H1 (cell line): ENCODE measurements at regions of chr2 and their contacts with region 1.

Region 1: GRCh38 chr2:21118302-21118920 is 5.4 kb upstream of the TDRD15 start:
- DNase-seq: no peak
- H3K4me3 ChIP-seq: no peak overlapping the region
- H3K27ac ChIP-seq: no peak overlapping the region
- H3K4me1 ChIP-seq: no peaks in the 10 kb centered on the region
- H3K27me3 ChIP-seq: no peaks in the 10 kb centered on the region
- CTCF ChIP-seq: peak in 2 of 3 experiments; percentile 61 to 64; a peak in 3 of 4 replicates
- EP300 ChIP-seq: no peak
- POLR2A ChIP-seq: no peak
- RAD21 ChIP-seq: peak; percentile 86 to 88

Region 2: GRCh38 chr2:20976527-20976926 is 141.9 kb before region 1 on chr2:
- CTCF ChIA-PET with region 1: no interaction called
- POLR2A ChIA-PET with region 1: no interaction called
- DNase-seq: no peak
- H3K4me3 ChIP-seq: no peak overlapping the region
- H3K27ac ChIP-seq: no peak overlapping the region
- H3K4me1 ChIP-seq: no peaks in the 10 kb centered on the region
- H3K27me3 ChIP-seq: no peaks in the 10 kb centered on the region
- CTCF ChIP-seq: no peak
- EP300 ChIP-seq: no peak
- POLR2A ChIP-seq: no peak
- RAD21 ChIP-seq: no peak

Region 3: DNA sequence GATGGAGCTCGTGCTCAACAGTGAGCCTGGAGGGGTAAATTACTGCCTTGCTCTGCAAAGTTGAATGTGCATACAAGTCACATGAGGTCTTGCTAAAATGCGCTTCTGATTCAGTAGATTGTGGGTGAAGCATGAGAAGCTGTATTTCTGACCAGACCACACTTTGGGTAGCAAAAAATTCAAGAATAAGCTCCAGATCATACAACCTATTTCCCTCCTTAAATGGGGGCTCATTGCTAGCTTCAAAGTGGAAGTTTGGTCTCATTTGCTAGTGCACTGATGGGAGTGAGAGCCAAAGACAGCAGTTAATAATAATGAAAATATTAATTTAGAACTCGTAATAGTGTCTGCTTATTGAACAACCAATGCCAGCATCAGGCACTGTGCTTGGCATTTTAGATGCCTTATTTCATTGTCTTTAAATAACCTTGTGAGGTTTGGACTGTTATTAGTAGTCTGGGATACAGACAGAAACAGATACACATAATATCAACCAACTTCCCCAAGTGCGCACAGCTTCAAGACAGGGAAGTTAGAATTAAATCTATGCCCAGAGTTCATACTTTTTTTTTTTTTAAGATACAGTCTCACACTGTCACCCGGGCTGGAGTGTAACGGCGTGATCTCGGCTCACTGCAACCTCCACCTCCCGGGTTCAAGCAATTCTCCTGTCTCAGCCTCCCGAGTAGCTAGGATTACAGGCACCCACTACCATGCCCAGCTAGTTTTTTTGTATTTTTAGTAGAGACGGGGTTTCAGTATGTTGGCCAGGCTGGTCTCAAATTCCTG is 92.5 kb before region 1 on chr2:
- CTCF ChIA-PET with region 1: interaction called, 11 read pairs
- POLR2A ChIA-PET with region 1: no interaction called
- DNase-seq: no peak
- H3K4me3 ChIP-seq: no peak overlapping the region
- H3K27ac ChIP-seq: no peak overlapping the region
- H3K4me1 ChIP-seq: no peaks in the 10 kb centered on the region
- H3K27me3 ChIP-seq: no peaks in the 10 kb centered on the region
- CTCF ChIP-seq: no peak
- EP300 ChIP-seq: no peak
- POLR2A ChIP-seq: no peak
- RAD21 ChIP-seq: no peak

Region 4: GRCh38 chr2:21042958-21043743 is 75.3 kb before region 1 on chr2:
- CTCF ChIA-PET with region 1: interaction called, 188 read pairs
- POLR2A ChIA-PET with region 1: no interaction called
- DNase-seq: peak; percentile 38 to 89
- H3K4me3 ChIP-seq: peak overlapping the region; percentile 40 to 68 (median 52)
- H3K27ac ChIP-seq: no peak overlapping the region
- H3K4me1 ChIP-seq: peaks cover 0 to 10% (median 9%) of the 10 kb centered on the region in 4 experiments
- H3K27me3 ChIP-seq: peaks cover 1 to 12% (median 9%) of the 10 kb centered on the region in 4 experiments; a peak in 6 of 7 replicates
- CTCF ChIP-seq: peak; percentile 88 to 96 (median 90)
- EP300 ChIP-seq: no peak
- POLR2A ChIP-seq: no peak
- RAD21 ChIP-seq: peak; percentile 96 to 100

Region 5: DNA sequence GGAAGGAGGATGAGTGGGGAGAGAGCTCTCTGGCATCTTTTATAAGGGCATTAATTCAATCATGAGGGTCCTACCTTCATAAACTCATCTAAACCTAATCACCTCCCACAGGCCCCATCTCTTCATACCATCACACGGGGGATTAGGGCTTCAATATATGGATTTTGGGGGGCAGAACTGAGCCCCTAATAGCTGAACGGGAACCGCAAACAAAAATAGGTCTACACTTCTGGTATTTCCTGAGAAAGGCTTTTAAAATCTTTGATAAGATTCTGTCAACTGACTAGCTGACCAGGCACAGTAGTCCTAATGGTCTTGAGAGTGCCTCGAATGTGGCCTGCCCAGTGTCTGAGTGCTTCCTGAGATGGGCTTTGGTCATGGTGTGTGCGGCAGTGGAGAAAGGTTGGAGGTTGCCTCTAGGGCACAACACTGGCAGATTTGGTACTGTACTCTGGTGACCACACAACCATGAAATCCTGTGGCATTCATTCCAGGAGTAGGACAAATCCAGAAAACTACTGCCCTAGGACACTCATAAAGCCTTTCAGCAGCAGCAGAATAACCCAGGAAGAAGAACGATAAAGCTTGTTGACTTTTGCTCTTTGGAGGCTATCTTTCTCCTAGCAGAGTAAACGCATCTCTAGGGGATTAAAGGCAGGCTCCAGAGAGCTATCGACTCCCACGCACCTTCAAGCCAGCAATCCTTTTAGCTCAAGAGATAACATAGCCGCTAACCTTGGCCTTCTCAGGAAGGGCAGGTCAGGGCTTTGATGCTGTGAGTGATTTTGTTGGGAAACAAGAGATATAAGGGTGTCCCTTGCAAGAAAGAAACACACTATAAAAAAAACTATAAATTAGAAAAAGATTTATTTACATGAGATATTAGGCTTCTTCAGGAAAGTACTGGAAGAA is 62.3 kb before region 1 on chr2:
- CTCF ChIA-PET with region 1: interaction called, 22 read pairs
- POLR2A ChIA-PET with region 1: no interaction called
- DNase-seq: no peak
- H3K4me3 ChIP-seq: no peak overlapping the region
- H3K27ac ChIP-seq: no peak overlapping the region
- H3K4me1 ChIP-seq: peaks cover 0 to 4% (median 0%) of the 10 kb centered on the region in 4 experiments; a peak in 1 of 7 replicates
- H3K27me3 ChIP-seq: no peaks in the 10 kb centered on the region
- CTCF ChIP-seq: no peak
- EP300 ChIP-seq: no peak
- POLR2A ChIP-seq: no peak
- RAD21 ChIP-seq: no peak

Region 6: GRCh38 chr2:21096458-21096857 is 22.0 kb before region 1 on chr2:
- CTCF ChIA-PET with region 1: interaction called, 16 read pairs
- POLR2A ChIA-PET with region 1: no interaction called
- DNase-seq: no peak
- H3K4me3 ChIP-seq: no peak overlapping the region
- H3K27ac ChIP-seq: no peak overlapping the region
- H3K4me1 ChIP-seq: peaks cover 0 to 8% (median 1%) of the 10 kb centered on the region in 4 experiments; a peak in 3 of 7 replicates
- H3K27me3 ChIP-seq: no peaks in the 10 kb centered on the region
- CTCF ChIP-seq: no peak
- EP300 ChIP-seq: no peak
- POLR2A ChIP-seq: no peak
- RAD21 ChIP-seq: no peak

Region 7: GRCh38 chr2:21203976-21204375 is 85.6 kb after region 1 on chr2:
- CTCF ChIA-PET with region 1: no interaction called
- POLR2A ChIA-PET with region 1: no interaction called
- DNase-seq: no peak
- H3K4me3 ChIP-seq: no peak overlapping the region
- H3K27ac ChIP-seq: no peak overlapping the region
- H3K4me1 ChIP-seq: no peaks in the 10 kb centered on the region; a peak in 1 of 7 replicates
- H3K27me3 ChIP-seq: no peaks in the 10 kb centered on the region
- CTCF ChIP-seq: no peak
- EP300 ChIP-seq: no peak
- POLR2A ChIP-seq: no peak
- RAD21 ChIP-seq: no peak